HCT116 (cell line): ENCODE measurements at regions of chr12 and their contacts with region 1.

Region 1: GRCh38 chr12:104286538-104287482 is 16.7 kb upstream of the EID3 start:
- DNase-seq: peak; percentile 96
- ATAC-seq: peak; percentile 84
- H3K4me3 ChIP-seq: peak overlapping the region; percentile 92 to 93
- H3K27ac ChIP-seq: peak overlapping the region; percentile 96
- H3K4me1 ChIP-seq: peaks cover 26 to 72% of the 10 kb centered on the region in 2 experiments
- H3K27me3 ChIP-seq: no peaks in the 10 kb centered on the region
- CTCF ChIP-seq: no peak
- POLR2A ChIP-seq: peak; percentile 87
- RAD21 ChIP-seq: 0 out of 2 replicates have a peak, but pooled peaks have one; percentile 25

Region 2: GRCh38 chr12:103930034-103930786 is 356.6 kb before region 1 on chr12 and contains the start of gene HSP90B1:
- CTCF ChIA-PET with region 1: no interaction called
- POLR2A ChIA-PET with region 1: no interaction called
- RAD21 ChIA-PET with region 1: no interaction called
- intact Hi-C with region 1: no loop called
- DNase-seq: peak; percentile 100
- ATAC-seq: peak; percentile 89
- H3K4me3 ChIP-seq: peak within 1 kb of the TSS; percentile 84 to 86
- H3K27ac ChIP-seq: peak within 1 kb of the TSS; percentile 68
- H3K4me1 ChIP-seq: peaks cover 8 to 27% of the 10 kb centered on the region in 2 experiments
- H3K27me3 ChIP-seq: no peaks in the 10 kb centered on the region
- CTCF ChIP-seq: no peak
- POLR2A ChIP-seq: peak; percentile 68
- RAD21 ChIP-seq: no peak
- total RNA-seq, gene HSP90B1: 888 TPM

Region 3: DNA sequence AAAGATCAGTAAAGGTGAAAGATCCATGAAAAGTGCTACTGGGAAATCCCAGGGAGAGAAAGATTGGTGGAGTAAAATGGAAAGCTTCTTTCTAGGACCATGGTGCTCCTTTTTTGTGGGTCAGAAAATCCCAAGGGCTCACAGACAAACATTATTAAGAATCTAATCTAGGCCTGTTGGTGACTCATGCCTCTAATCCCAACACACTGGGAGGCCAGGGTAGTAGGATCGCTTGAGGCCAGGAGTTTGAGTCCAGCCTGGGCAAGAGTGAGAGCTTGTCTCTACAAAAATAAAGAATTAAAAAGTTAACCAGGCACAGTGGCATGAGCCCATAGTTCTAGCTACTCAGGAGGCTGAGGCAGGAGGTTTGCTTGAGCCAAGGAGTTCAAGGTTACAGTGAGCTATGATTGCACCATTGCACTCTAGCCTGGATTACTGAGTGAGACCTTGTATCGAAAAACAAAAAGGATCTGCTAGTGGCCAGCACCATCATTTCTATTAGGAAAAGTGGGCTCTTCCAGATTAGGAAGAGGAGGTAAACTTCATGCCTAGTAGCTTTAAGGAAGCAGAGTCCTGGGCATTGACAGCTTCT is 28.2 kb before region 1 on chr12:
- CTCF ChIA-PET with region 1: interaction called, 4 read pairs
- POLR2A ChIA-PET with region 1: interaction called, 17 read pairs
- RAD21 ChIA-PET with region 1: no interaction called
- intact Hi-C with region 1: no loop called
- DNase-seq: no peak
- ATAC-seq: peak; percentile 43
- H3K4me3 ChIP-seq: no peak overlapping the region
- H3K27ac ChIP-seq: no peak overlapping the region
- H3K4me1 ChIP-seq: peaks cover 16 to 55% of the 10 kb centered on the region in 2 experiments
- H3K27me3 ChIP-seq: no peaks in the 10 kb centered on the region
- CTCF ChIP-seq: no peak
- POLR2A ChIP-seq: no peak
- RAD21 ChIP-seq: no peak

Region 4: GRCh38 chr12:104276273-104277131 is 10.3 kb before region 1 on chr12:
- CTCF ChIA-PET with region 1: no interaction called
- POLR2A ChIA-PET with region 1: interaction called, 56 read pairs
- RAD21 ChIA-PET with region 1: no interaction called
- intact Hi-C with region 1: no loop called
- DNase-seq: no peak
- ATAC-seq: no peak
- H3K4me3 ChIP-seq: peak overlapping the region in 1 of 2 experiments; percentile 24; a peak in 2 of 4 replicates
- H3K27ac ChIP-seq: peak overlapping the region; percentile 83
- H3K4me1 ChIP-seq: peaks cover 57 to 82% of the 10 kb centered on the region in 2 experiments
- H3K27me3 ChIP-seq: no peaks in the 10 kb centered on the region
- CTCF ChIP-seq: no peak
- POLR2A ChIP-seq: no peak
- RAD21 ChIP-seq: no peak